Sigmoid colon (tissue), 7 donors: ENCODE measurements at regions of chr6 and their contacts with region 1.

Region 1: GRCh38 chr6:118893807-118894424 is at the start of gene ASF1A:
- DNase-seq: peak; percentile 98
- H3K4me3 ChIP-seq: peak within 1 kb of the TSS; percentile 68 to 96 (median 82)
- H3K27ac ChIP-seq: peak within 1 kb of the TSS; percentile 93 to 98 (median 96)
- H3K4me1 ChIP-seq: peaks cover 0 to 38% (median 17%) of the 10 kb centered on the region in 4 donors
- H3K27me3 ChIP-seq: no peaks in the 10 kb centered on the region
- CTCF ChIP-seq: peak in 3 of 4 experiments; percentile 22 to 46 (median 33)
- EP300 ChIP-seq: no peak
- POLR2A ChIP-seq: peak; percentile 60 to 63
- total RNA-seq, gene ASF1A: 10.2 to 17.1 (median 14.1) TPM

Region 2: GRCh38 chr6:117674991-117675657 is 1218.8 kb before region 1 on chr6 and contains the start of gene NUS1:
- intact Hi-C with region 1: loop called (anchors 10 kb)
- DNase-seq: peak; percentile 98
- H3K4me3 ChIP-seq: peak within 1 kb of the TSS; percentile 60 to 71 (median 70)
- H3K27ac ChIP-seq: peak within 1 kb of the TSS; percentile 76 to 84 (median 80)
- H3K4me1 ChIP-seq: peaks cover 0 to 43% (median 30%) of the 10 kb centered on the region in 4 donors
- H3K27me3 ChIP-seq: no peaks in the 10 kb centered on the region
- CTCF ChIP-seq: peak; percentile 45 to 71 (median 52)
- EP300 ChIP-seq: no peak
- POLR2A ChIP-seq: peak in 1 of 2 donors; percentile 24
- total RNA-seq, gene NUS1: 22.2 to 31.4 (median 25.1) TPM

Region 3: DNA sequence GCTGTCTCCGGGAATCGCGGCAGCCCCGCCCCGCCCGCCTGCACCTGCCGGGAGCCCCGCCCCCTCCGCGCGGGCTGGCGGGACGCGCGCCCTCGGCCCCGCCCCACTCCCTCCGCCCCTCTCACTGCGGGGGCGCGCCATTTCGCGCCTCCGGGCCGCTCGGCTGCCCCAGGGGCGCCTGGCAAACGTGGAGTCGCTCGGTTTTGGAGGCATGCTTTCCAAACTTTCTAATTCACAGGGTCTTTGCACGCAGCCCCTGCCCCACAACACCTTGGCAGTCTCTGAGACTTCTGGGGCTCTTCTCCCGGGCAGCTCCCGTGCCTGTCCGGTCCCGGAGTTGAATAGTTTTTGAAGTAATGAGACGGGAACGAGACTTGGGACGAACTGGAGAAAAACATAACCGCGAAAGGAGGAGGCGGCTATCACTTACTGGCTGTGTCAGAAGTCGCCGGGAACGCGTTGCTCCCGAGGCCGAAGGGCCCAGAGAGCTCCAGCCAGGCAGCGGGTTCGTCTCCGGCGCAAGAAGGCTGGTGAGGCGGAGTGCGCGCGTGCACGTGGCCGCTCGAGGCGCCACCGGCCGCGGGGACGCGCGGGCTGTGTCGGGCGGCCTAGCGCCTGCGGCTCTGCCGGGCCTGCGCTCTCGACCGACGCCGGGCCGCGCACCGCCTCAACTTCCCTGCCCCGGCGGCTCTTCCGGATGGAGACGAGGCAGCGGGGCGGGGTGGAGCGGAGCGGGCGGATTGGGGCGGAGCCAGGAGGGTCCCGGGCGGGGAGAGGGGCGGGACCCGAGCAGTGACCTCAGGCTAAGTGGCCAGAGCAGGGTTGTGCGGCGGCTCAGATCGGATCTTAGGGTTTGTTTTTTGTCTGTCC is 40.8 kb after region 1 on chr6 and contains the start of gene MCM9:
- intact Hi-C with region 1: loop called (anchors 1 kb)
- DNase-seq: peak; percentile 90
- H3K4me3 ChIP-seq: peak within 1 kb of the TSS; percentile 71 to 89 (median 78)
- H3K27ac ChIP-seq: peak within 1 kb of the TSS; percentile 93 to 97 (median 96)
- H3K4me1 ChIP-seq: peaks cover 0 to 21% (median 8%) of the 10 kb centered on the region in 4 donors
- H3K27me3 ChIP-seq: no peaks in the 10 kb centered on the region
- CTCF ChIP-seq: no peak
- EP300 ChIP-seq: no peak
- POLR2A ChIP-seq: peak in 1 of 2 donors; percentile 6
- total RNA-seq, gene MCM9: 10.2 to 16.1 (median 13.2) TPM

Region 4: GRCh38 chr6:118984342-118984741 is 90.4 kb after region 1 on chr6:
- intact Hi-C with region 1: no loop called
- DNase-seq: no peak
- H3K4me3 ChIP-seq: no peak overlapping the region
- H3K27ac ChIP-seq: no peak overlapping the region
- H3K4me1 ChIP-seq: no peaks in the 10 kb centered on the region
- H3K27me3 ChIP-seq: no peaks in the 10 kb centered on the region
- CTCF ChIP-seq: no peak
- EP300 ChIP-seq: no peak
- POLR2A ChIP-seq: no peak